ENCODE measurements at regions of chr2 and their contacts with region 1.

Region 1: DNA sequence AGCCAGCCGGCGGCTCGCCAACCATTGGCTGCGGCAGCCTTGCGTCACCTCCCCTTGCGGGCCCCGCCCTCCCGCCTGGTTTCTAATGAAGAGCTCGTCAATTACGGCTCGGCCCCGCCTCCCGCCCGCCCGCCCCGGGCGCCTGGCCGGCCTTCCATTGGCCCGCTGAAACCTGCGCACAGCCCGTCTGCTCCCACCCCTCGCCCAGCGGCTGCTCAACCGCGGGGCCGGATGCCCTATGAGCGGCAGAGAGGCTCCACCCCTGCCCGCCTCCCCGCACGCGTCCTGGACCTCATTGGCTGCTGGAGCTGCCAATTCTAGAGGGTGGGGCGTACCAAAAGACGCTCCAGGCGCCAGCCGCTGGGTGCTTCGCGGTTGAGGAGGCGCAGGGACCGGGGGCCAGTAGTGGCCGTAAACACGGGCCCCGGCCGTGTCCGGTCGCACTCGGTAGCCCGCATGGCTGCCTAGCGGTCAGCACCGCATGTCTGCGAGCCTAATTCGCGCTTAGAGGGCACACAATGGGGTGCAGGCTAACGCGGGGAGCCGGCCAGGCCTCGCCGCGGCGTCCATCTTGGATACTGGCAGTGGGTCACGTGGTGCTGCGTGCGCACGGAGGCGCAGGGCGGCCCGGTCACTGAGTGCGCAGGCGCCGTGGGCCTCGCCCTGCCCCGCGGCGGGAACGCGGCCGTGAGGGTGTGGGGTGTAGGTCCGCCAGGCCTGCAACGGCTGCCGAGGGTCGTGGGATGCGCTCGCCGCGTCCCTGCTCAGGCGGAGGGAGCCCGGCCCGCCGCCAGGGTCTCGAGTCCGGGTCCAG is 454 bp upstream of the HDAC4 start:
- DNase-seq: peak; percentile 97
- H3K4me3 ChIP-seq: peak overlapping the region; percentile 68
- H3K27ac ChIP-seq: peak overlapping the region; percentile 54
- H3K4me1 ChIP-seq: peaks cover 19% of the 10 kb centered on the region
- CTCF ChIP-seq: no peak

Region 2: DNA sequence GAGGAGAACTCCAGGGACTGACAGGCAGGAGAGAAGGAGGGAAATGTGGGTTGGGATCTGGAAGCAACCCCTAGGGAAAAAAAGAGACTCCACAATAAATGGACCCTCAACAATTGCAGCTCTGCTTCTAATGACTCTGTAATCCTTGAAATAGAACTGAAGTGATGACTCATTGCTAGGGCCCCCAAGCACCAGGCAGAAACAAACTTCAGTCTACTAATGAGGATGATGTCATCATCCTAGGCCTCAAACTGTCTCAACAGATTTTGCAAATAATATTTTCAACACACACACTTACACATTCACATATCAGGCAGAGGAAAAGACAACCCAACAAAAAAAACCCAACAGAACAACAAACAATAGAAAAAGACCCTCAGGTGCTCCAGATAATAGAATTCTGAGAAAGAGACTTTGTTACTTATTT is 143.8 kb before region 1 on chr2:
- CTCF ChIA-PET with region 1: no interaction called
- POLR2A ChIA-PET with region 1: no interaction called
- intact Hi-C with region 1: loop called (anchors 5 kb)
- DNase-seq: no peak
- H3K4me3 ChIP-seq: no peak overlapping the region
- H3K27ac ChIP-seq: no peak overlapping the region
- H3K4me1 ChIP-seq: peaks cover 49% of the 10 kb centered on the region
- CTCF ChIP-seq: no peak

Region 3: DNA sequence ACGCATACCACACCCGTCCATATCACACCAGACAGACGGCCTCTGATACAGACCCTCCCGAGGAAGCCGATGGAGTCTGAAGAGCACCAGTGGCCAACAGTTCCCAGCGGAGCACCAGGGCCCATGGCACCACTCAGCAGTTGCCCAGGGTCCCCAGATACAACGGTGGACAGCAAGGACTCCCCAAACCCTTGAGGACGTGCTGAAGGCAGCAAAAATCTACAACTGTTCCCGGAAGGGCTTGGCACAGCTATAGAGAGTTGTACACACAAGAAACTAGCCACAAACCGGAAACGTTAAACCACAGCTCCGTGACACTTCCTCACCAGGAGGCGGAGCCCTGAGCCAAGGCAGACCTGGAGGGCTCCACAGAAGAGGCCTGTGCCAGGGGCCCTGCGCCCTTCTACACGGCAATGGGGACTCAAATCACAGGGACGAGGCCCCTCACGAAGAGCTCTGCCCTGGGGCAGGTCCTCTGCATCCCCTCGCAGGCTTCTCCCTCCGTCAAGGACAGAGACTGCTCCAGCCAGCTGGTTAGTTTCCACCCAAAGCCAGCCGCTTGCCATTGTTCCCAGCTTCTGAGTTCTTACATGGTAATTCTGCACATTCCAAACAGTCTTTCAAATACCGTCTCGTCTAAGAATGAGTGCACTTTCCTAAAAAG is 133.9 kb before region 1 on chr2:
- CTCF ChIA-PET with region 1: interaction called, 3 read pairs
- POLR2A ChIA-PET with region 1: no interaction called
- intact Hi-C with region 1: loop called (anchors 2 kb)
- DNase-seq: peak; percentile 91
- H3K4me3 ChIP-seq: peak overlapping the region; percentile 55
- H3K27ac ChIP-seq: no peak overlapping the region
- H3K4me1 ChIP-seq: peaks cover 35% of the 10 kb centered on the region
- CTCF ChIP-seq: peak; percentile 67

Region 4: GRCh38 chr2:239369631-239370161 is 31.6 kb before region 1 on chr2:
- CTCF ChIA-PET with region 1: no interaction called
- POLR2A ChIA-PET with region 1: no interaction called
- intact Hi-C with region 1: loop called (anchors 2 kb)
- DNase-seq: peak; percentile 73
- H3K4me3 ChIP-seq: no peak overlapping the region
- H3K27ac ChIP-seq: no peak overlapping the region
- H3K4me1 ChIP-seq: peaks cover 17% of the 10 kb centered on the region
- CTCF ChIP-seq: no peak

Region 5: GRCh38 chr2:239389414-239390329 is 11.6 kb before region 1 on chr2:
- CTCF ChIA-PET with region 1: no interaction called
- POLR2A ChIA-PET with region 1: no interaction called
- intact Hi-C with region 1: no loop called
- DNase-seq: no peak
- H3K4me3 ChIP-seq: no peak overlapping the region
- H3K27ac ChIP-seq: no peak overlapping the region
- H3K4me1 ChIP-seq: no peaks in the 10 kb centered on the region
- CTCF ChIP-seq: no peak

Region 6: DNA sequence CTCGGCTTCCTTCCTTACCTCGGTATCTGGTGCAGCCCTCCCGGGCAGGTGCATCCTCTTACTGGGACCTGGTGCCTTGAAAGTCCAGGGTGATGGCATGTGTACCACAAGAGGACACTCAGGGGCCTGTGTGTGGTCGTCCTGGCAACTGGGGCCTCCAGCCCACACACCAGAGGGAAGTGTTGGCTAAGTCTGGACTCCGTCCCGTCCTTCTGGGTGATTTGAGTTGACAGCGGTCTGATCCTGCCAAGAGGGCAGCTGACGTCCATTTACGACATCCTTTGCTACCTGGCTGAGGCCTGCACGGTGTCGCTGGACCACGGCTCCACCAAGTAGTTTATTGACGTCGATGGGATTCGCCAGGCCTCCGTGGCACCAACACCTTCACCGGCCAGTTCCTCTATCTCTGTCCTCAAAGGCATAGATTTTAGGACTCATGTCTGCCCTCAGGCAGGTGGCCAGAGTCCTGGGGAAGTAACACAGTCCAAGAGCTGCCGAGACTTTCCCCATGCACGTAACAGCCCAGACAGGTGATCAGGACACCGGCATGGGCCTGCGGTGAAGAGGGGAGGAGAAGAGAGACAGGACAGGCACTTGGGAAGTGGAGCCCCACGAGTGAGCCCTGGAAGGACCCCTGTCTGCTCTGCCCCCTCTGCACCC is 185.5 kb after region 1 on chr2:
- CTCF ChIA-PET with region 1: no interaction called
- POLR2A ChIA-PET with region 1: no interaction called
- intact Hi-C with region 1: no loop called
- DNase-seq: no peak
- H3K4me3 ChIP-seq: no peak overlapping the region
- H3K27ac ChIP-seq: no peak overlapping the region
- H3K4me1 ChIP-seq: no peaks in the 10 kb centered on the region
- CTCF ChIP-seq: no peak

Region 7: GRCh38 chr2:239979243-239980023 is 578.2 kb after region 1 on chr2:
- CTCF ChIA-PET with region 1: no interaction called
- POLR2A ChIA-PET with region 1: no interaction called
- intact Hi-C with region 1: no loop called
- DNase-seq: no peak
- H3K4me3 ChIP-seq: no peak overlapping the region
- H3K27ac ChIP-seq: no peak overlapping the region
- H3K4me1 ChIP-seq: no peaks in the 10 kb centered on the region
- CTCF ChIP-seq: 0 out of 2 replicates have a peak, but pooled peaks have one; percentile 13